ENCODE measurements at regions of chr17 and their contacts with region 1.

Region 1: GRCh38 chr17:33302394-33302793 is 9.3 kb upstream of the ASIC2 start:
- DNase-seq: no peak
- ATAC-seq: no peak
- H3K4me3 ChIP-seq: no peak overlapping the region
- H3K27ac ChIP-seq: no peak overlapping the region
- H3K4me1 ChIP-seq: no peaks in the 10 kb centered on the region
- H3K27me3 ChIP-seq: peaks cover 0 to 50% (median 8%) of the 10 kb centered on the region in 9 donors
- CTCF ChIP-seq: no peak
- POLR2A ChIP-seq: no peak

Region 2: GRCh38 chr17:33258291-33258690 is 44.1 kb before region 1 on chr17:
- intact Hi-C with region 1: loop called in 1 of 10 experiments (anchors 5 kb)
- DNase-seq: no peak
- ATAC-seq: no peak
- H3K4me3 ChIP-seq: no peak overlapping the region
- H3K27ac ChIP-seq: no peak overlapping the region
- H3K4me1 ChIP-seq: no peaks in the 10 kb centered on the region
- H3K27me3 ChIP-seq: peaks cover 0 to 50% (median 2%) of the 10 kb centered on the region in 9 donors
- CTCF ChIP-seq: no peak
- POLR2A ChIP-seq: no peak

Region 3: GRCh38 chr17:33352526-33352925 is 50.1 kb after region 1 on chr17:
- intact Hi-C with region 1: loop called in 1 of 10 experiments (anchors 5 kb)
- DNase-seq: no peak
- ATAC-seq: no peak
- H3K4me3 ChIP-seq: no peak overlapping the region
- H3K27ac ChIP-seq: no peak overlapping the region
- H3K4me1 ChIP-seq: no peaks in the 10 kb centered on the region
- H3K27me3 ChIP-seq: peaks cover 0 to 11% (median 0%) of the 10 kb centered on the region in 9 donors
- CTCF ChIP-seq: no peak
- POLR2A ChIP-seq: no peak